H1 (cell line): ENCODE measurements at regions of chr1 and their contacts with region 1.

Region 1: DNA sequence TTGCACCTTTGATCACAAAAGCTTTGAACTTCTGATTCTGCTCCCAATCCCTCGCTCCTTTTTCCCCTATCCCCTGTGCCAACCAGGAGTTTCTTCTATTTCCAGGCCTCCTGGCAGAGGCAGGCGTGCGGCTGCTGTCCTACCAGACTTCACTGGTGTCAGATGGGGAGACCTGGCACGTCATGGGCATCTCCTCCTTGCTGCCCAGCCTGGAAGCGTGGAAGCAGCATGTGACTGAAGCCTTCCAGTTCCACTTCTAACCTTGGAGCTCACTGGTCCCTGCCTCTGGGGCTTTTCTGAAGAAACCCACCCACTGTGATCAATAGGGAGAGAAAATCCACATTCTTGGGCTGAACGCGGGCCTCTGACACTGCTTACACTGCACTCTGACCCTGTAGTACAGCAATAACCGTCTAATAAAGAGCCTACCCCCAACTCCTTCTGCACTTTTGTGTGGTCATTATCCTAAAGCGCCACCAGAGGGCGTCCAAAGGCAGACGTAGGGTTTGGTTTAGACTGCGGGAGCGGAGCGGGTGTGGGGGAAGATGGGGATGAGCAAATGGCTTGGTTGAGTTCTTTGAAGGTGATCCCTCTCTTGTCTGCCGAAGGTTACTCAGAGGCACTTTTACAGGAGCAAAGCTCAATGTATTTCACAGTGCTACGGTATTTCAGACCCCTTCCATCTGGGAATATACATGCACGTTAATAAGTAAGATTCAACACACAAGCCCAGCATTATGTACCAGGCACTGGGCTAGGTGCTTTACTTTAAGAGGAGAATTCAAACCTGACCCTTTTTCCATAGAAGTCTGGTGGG is 24.7 kb downstream of the HMGCS2 start:
- DNase-seq: peak; percentile 49 to 77
- H3K4me3 ChIP-seq: no peak overlapping the region
- H3K27ac ChIP-seq: no peak overlapping the region
- H3K4me1 ChIP-seq: peaks cover 0 to 8% (median 5%) of the 10 kb centered on the region in 4 experiments; a peak in 2 of 7 replicates
- H3K27me3 ChIP-seq: no peaks in the 10 kb centered on the region
- CTCF ChIP-seq: peak; percentile 70 to 89 (median 88)
- EP300 ChIP-seq: no peak
- POLR2A ChIP-seq: peak in 1 of 2 experiments; percentile 39; a peak in 2 of 3 replicates
- RAD21 ChIP-seq: peak; percentile 83 to 88

Region 2: GRCh38 chr1:119594376-119594775 is 149.6 kb before region 1 on chr1:
- CTCF ChIA-PET with region 1: no interaction called
- POLR2A ChIA-PET with region 1: no interaction called
- DNase-seq: no peak
- H3K4me3 ChIP-seq: no peak overlapping the region
- H3K27ac ChIP-seq: no peak overlapping the region
- H3K4me1 ChIP-seq: no peaks in the 10 kb centered on the region
- H3K27me3 ChIP-seq: no peaks in the 10 kb centered on the region
- CTCF ChIP-seq: no peak
- EP300 ChIP-seq: no peak
- POLR2A ChIP-seq: no peak
- RAD21 ChIP-seq: no peak

Region 3: DNA sequence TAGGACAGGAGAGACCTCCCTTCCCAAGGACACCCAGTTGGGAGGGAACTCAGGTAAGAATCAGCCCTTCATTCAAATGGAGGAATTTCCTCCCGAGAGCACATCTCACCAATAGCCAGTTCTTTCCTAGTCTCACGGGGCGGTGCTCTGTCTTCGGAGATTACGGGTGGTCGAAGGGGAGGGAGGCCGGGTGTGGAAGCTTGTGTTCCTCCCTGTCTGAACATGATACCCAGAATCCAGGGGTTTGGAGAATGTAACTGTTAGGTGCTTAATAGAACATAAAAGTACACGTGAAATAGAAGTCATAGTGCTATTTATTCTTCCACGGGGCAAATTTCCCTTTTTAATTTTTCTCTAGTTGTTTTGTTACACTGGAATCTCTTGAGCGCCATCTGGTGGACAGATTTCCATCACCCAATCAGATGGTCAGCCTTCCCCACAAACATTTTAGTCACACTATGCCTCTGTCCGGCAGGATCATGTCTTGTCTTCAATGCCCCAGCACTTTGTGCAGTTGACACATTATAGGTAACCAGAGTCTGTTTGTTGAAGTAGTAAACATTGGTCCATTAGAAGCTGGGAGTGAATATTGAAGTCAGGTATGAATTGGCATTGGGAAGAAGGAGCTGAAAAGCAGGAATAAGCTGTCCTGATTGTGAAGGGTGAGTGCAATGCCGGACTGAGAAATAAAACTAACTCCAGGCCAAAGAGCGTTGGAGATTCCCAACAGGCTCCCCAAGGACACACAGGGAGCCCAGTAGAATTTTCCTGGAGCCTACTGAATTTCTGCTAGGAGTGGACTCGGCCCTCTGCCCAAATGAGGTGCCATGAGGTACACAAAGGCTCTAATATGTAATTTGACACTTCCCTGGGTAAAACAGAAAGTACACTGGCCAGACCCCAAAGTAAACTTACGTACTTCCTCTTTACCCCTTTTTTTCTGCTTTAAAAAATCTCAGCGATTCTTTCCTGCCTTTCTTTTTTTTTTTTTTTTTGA is 68.3 kb before region 1 on chr1:
- CTCF ChIA-PET with region 1: interaction called, 38 read pairs
- POLR2A ChIA-PET with region 1: interaction called, 10 read pairs
- DNase-seq: peak in 1 of 2 experiments; percentile 87
- H3K4me3 ChIP-seq: peak overlapping the region; percentile 27 to 55 (median 34); a peak in 5 of 8 replicates
- H3K27ac ChIP-seq: no peak overlapping the region
- H3K4me1 ChIP-seq: peaks cover 5 to 17% (median 12%) of the 10 kb centered on the region in 4 experiments; a peak in 6 of 7 replicates
- H3K27me3 ChIP-seq: no peaks in the 10 kb centered on the region
- CTCF ChIP-seq: peak; percentile 36 to 71 (median 48)
- EP300 ChIP-seq: no peak
- POLR2A ChIP-seq: peak in 1 of 2 experiments; percentile 29; a peak in 1 of 3 replicates
- RAD21 ChIP-seq: peak; percentile 44 to 54

Region 4: GRCh38 chr1:119758584-119758983 is 14.6 kb after region 1 on chr1:
- CTCF ChIA-PET with region 1: interaction called, 67 read pairs
- POLR2A ChIA-PET with region 1: interaction called, 6 read pairs
- DNase-seq: no peak
- H3K4me3 ChIP-seq: no peak overlapping the region
- H3K27ac ChIP-seq: no peak overlapping the region
- H3K4me1 ChIP-seq: peaks cover 0 to 3% (median 0%) of the 10 kb centered on the region in 4 experiments; a peak in 2 of 7 replicates
- H3K27me3 ChIP-seq: no peaks in the 10 kb centered on the region
- CTCF ChIP-seq: no peak
- EP300 ChIP-seq: no peak
- POLR2A ChIP-seq: no peak
- RAD21 ChIP-seq: no peak

Region 5: DNA sequence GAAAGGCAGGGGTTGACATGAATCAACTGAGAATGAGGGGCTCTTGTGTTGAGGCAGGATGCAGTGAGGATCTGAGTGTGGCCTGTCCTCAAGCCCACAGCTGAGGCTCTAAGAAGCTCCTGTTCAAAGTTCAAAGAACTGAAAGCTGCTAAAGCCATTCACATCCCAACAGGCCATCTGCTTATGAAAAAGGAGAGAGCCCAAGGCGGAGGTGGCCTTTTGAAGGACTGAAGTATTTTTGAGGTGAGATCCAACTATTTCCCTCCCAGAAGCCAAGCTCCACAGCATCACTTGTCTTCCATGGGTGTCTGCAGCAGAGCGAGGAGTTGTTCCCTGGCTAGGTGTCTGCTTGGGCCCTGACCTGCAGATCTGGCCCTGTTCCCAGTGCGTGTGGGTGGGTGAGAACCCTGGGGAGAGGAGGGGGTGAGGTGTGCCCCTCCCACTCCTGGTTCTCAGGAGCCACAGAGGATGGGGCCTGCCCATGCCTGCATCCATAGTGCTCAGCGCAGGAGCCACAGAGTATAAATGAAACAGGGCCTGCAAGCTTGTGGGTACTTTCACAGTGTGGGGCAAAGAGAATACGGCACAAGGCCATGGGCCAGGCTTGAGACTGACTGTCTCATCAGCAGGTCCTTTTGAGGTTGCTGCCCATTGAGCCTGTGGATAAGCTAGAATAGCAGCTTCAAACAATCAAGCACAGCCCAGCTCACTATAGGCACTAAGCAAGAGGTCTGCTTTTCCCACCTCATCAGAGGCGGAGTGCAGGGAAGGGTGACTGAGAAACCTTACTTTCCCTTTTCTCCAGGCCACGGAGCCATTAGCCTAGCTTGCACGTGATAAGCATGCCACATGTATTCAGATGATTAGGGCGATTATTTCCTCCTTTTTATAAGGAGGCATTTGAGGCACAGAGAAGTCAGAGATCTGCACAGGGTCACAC is 51.5 kb after region 1 on chr1:
- CTCF ChIA-PET with region 1: interaction called, 10 read pairs
- POLR2A ChIA-PET with region 1: interaction called, 7 read pairs
- DNase-seq: peak in 1 of 2 experiments; percentile 36
- H3K4me3 ChIP-seq: no peak overlapping the region
- H3K27ac ChIP-seq: no peak overlapping the region
- H3K4me1 ChIP-seq: peaks cover 0 to 3% (median 0%) of the 10 kb centered on the region in 4 experiments; a peak in 1 of 7 replicates
- H3K27me3 ChIP-seq: no peaks in the 10 kb centered on the region; a peak in 1 of 7 replicates
- CTCF ChIP-seq: no peak
- EP300 ChIP-seq: no peak
- POLR2A ChIP-seq: no peak
- RAD21 ChIP-seq: no peak

Region 6: DNA sequence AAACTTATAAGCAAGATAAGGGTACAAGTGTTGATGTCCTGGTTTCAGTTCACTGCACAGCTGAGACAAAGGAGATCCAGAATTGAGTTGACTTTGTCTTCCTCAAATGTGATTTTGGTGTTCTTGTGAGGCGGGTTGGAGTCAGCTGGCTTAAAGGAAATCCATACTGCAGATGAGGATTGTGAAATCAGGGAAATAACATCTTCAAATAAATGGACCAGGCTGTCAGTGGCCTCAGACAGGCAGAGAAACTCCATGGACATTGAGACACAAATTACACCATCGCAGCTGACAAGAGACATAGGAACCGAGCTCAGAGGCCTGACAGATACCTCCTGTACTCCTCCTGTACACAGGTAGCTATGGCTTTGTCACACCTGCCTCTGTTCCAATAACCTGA is 94.2 kb after region 1 on chr1:
- CTCF ChIA-PET with region 1: interaction called, 10 read pairs
- POLR2A ChIA-PET with region 1: no interaction called
- DNase-seq: no peak
- H3K4me3 ChIP-seq: no peak overlapping the region
- H3K27ac ChIP-seq: no peak overlapping the region
- H3K4me1 ChIP-seq: no peaks in the 10 kb centered on the region
- H3K27me3 ChIP-seq: no peaks in the 10 kb centered on the region; a peak in 1 of 7 replicates
- CTCF ChIP-seq: no peak
- EP300 ChIP-seq: no peak
- POLR2A ChIP-seq: no peak
- RAD21 ChIP-seq: no peak